ENCODE measurements at regions of chr6 and their contacts with region 1.

Region 1: DNA sequence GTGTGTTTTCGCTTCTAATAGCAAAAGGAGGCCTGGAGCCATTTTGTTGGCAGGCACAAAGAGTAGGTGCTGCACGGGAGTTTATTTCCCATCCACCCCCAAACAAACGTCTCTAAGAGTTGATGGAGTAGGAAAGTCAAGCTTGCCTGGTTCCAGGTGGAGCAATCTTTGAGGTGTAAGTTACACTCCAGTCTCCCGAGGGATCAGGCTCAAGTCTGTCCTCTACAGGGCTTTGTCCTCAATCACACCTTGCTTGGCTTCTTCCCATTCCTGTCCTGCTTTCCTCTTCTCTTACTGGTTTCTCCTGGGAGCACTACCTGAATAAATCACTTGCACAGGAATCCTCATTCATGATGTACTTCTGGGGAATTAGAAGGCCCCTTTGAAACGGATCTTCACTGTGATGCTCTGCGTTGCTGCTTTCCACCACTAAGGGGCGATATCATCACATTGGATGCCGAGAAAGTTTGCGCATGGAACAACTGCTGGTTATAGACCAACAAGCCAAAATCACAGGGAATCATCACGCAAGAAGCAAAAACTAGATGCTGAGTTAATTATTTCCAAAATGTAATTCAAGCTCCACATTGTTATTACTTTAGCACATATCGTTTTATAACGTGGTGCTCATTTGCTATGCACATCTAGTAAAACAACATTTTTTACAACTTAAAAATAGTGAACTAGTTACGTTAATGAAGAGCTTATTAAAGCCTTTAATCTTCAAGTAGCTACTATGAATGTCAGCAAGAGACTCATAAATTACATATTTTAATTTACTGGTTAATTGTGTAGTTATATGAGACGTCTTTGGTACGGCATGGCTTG is 156.8 kb downstream of the DNAH8 start:
- DNase-seq: peak; percentile 57 to 70 (median 64)
- ATAC-seq: peak; percentile 92
- H3K4me3 ChIP-seq: no peak overlapping the region
- H3K27ac ChIP-seq: no peak overlapping the region
- H3K4me1 ChIP-seq: no peaks in the 10 kb centered on the region
- H3K27me3 ChIP-seq: no peaks in the 10 kb centered on the region
- CTCF ChIP-seq: peak; percentile 91 to 95 (median 91)
- EP300 ChIP-seq: no peak
- POLR2A ChIP-seq: no peak
- RAD21 ChIP-seq: peak; percentile 77 to 86

Region 2: DNA sequence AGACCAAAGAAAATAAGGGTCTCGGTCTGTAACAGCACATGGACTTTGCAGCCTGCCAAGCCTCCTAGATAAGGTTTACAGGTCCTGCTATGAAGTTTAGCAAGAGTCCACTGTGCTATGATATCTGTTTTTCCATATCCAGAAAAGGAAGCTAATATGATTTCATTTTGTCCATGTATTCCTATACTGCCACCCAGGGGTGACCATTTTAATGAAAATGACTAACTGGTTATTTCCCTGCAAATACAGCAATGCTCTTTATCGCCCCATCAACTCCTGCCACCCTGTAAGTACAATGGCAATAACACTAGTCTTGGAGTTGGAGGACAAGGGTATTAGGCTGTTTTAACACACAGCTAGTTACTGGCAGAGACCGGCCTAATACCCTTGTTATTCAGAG is 61.5 kb after region 1 on chr6:
- CTCF ChIA-PET with region 1: no interaction called
- POLR2A ChIA-PET with region 1: no interaction called
- in situ Hi-C with region 1: no loop called
- intact Hi-C with region 1: loop called (anchors 5 kb)
- DNase-seq: peak in 2 of 4 experiments; percentile 37 to 40
- ATAC-seq: peak; percentile 69
- H3K4me3 ChIP-seq: no peak overlapping the region
- H3K27ac ChIP-seq: no peak overlapping the region
- H3K4me1 ChIP-seq: no peaks in the 10 kb centered on the region
- H3K27me3 ChIP-seq: peaks cover 15 to 19% of the 10 kb centered on the region in 2 experiments
- CTCF ChIP-seq: peak; percentile 26 to 70 (median 50); a peak in 5 of 6 replicates
- EP300 ChIP-seq: no peak
- POLR2A ChIP-seq: no peak
- RAD21 ChIP-seq: peak; percentile 43 to 65

Region 3: GRCh38 chr6:38997128-38997761 is 125.3 kb after region 1 on chr6:
- CTCF ChIA-PET with region 1: no interaction called
- POLR2A ChIA-PET with region 1: no interaction called
- in situ Hi-C with region 1: no loop called
- intact Hi-C with region 1: loop called (anchors 2 kb)
- DNase-seq: peak; percentile 52 to 70 (median 58)
- ATAC-seq: peak; percentile 89
- H3K4me3 ChIP-seq: no peak overlapping the region
- H3K27ac ChIP-seq: no peak overlapping the region
- H3K4me1 ChIP-seq: no peaks in the 10 kb centered on the region
- H3K27me3 ChIP-seq: peaks cover 32 to 34% of the 10 kb centered on the region in 2 experiments
- CTCF ChIP-seq: peak; percentile 82 to 91 (median 88)
- EP300 ChIP-seq: no peak
- POLR2A ChIP-seq: no peak
- RAD21 ChIP-seq: peak; percentile 85 to 93

Region 4: GRCh38 chr6:39102071-39102820 is 230.3 kb after region 1 on chr6:
- CTCF ChIA-PET with region 1: interaction called, 8 read pairs
- POLR2A ChIA-PET with region 1: no interaction called
- in situ Hi-C with region 1: no loop called
- intact Hi-C with region 1: loop called (anchors 5 kb)
- DNase-seq: peak; percentile 79 to 89 (median 85)
- ATAC-seq: peak; percentile 99
- H3K4me3 ChIP-seq: no peak overlapping the region
- H3K27ac ChIP-seq: no peak overlapping the region
- H3K4me1 ChIP-seq: no peaks in the 10 kb centered on the region
- H3K27me3 ChIP-seq: peaks cover 5 to 10% of the 10 kb centered on the region in 2 experiments; a peak in 2 of 5 replicates
- CTCF ChIP-seq: peak; percentile 88 to 91 (median 91)
- EP300 ChIP-seq: no peak
- POLR2A ChIP-seq: no peak
- RAD21 ChIP-seq: peak; percentile 77 to 92

Region 5: GRCh38 chr6:39166189-39166911 is 294.4 kb after region 1 on chr6:
- CTCF ChIA-PET with region 1: interaction called, 3 read pairs
- POLR2A ChIA-PET with region 1: no interaction called
- in situ Hi-C with region 1: no loop called
- intact Hi-C with region 1: loop called (anchors 10 kb)
- DNase-seq: peak; percentile 89 to 95 (median 92)
- ATAC-seq: peak; percentile 99
- H3K4me3 ChIP-seq: no peak overlapping the region
- H3K27ac ChIP-seq: no peak overlapping the region
- H3K4me1 ChIP-seq: no peaks in the 10 kb centered on the region
- H3K27me3 ChIP-seq: no peaks in the 10 kb centered on the region; a peak in 2 of 5 replicates
- CTCF ChIP-seq: peak; percentile 97
- EP300 ChIP-seq: no peak
- POLR2A ChIP-seq: no peak
- RAD21 ChIP-seq: peak; percentile 98 to 100

Region 6: DNA sequence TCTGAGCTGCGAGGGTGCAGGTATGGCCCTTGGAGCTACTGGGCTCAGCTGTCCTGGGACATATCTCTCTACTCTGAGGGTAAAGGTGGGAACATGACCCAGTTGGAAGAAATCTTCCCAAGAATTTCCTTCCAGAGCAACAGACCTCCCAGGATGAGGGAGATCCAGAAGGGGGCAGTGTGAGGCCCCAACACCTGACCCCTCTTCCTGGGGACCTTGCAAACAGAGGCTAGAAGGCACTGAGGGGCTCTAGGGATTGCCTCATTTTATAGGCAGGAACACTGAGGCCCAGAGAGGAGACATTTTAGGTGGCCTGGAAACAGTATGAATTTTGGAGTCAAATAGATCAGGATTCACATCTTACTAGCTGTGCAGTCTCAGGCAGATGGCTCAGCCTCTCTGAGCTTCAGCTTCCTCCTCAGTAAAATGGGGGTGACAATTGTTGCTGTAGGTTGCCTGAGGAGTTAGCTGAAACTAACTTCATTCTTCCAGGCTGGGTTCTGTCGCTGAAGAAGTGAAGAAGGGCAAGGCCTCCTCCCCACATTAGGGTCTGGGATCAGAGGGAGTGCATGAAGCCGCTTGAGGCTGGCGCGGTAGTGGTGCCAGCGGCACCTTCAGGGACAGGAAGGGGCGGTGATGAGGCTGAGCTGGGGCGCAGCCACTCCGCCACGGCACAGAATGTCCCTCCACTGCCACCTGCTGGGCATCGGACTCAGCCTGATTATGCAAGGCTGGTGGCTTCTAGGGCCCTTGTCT is 430.9 kb after region 1 on chr6:
- CTCF ChIA-PET with region 1: no interaction called
- POLR2A ChIA-PET with region 1: no interaction called
- in situ Hi-C with region 1: loop called (anchors 5 kb)
- intact Hi-C with region 1: no loop called
- DNase-seq: peak; percentile 89 to 94 (median 92)
- ATAC-seq: peak; percentile 95
- H3K4me3 ChIP-seq: no peak overlapping the region
- H3K27ac ChIP-seq: no peak overlapping the region
- H3K4me1 ChIP-seq: peaks cover 0 to 13% of the 10 kb centered on the region in 2 experiments; a peak in 3 of 5 replicates
- H3K27me3 ChIP-seq: peaks cover 27 to 66% of the 10 kb centered on the region in 2 experiments
- CTCF ChIP-seq: peak; percentile 97 to 98 (median 98)
- EP300 ChIP-seq: no peak
- POLR2A ChIP-seq: no peak
- RAD21 ChIP-seq: peak; percentile 99 to 100

Region 7: GRCh38 chr6:39309942-39310531 is 438.1 kb after region 1 on chr6:
- CTCF ChIA-PET with region 1: interaction called, 5 read pairs
- POLR2A ChIA-PET with region 1: no interaction called
- in situ Hi-C with region 1: no loop called
- intact Hi-C with region 1: loop called (anchors 1 kb)
- DNase-seq: peak; percentile 83 to 91 (median 89)
- ATAC-seq: peak; percentile 95
- H3K4me3 ChIP-seq: no peak overlapping the region
- H3K27ac ChIP-seq: no peak overlapping the region
- H3K4me1 ChIP-seq: peaks cover 0 to 13% of the 10 kb centered on the region in 2 experiments; a peak in 1 of 5 replicates
- H3K27me3 ChIP-seq: peaks cover 3 to 57% of the 10 kb centered on the region in 2 experiments; a peak in 4 of 5 replicates
- CTCF ChIP-seq: peak; percentile 92 to 97 (median 97)
- EP300 ChIP-seq: no peak
- POLR2A ChIP-seq: no peak
- RAD21 ChIP-seq: peak; percentile 96 to 98

Measured in K562 (cell line).